ENCODE measurements at regions of chr4 and their contacts with region 1.

Region 1: DNA sequence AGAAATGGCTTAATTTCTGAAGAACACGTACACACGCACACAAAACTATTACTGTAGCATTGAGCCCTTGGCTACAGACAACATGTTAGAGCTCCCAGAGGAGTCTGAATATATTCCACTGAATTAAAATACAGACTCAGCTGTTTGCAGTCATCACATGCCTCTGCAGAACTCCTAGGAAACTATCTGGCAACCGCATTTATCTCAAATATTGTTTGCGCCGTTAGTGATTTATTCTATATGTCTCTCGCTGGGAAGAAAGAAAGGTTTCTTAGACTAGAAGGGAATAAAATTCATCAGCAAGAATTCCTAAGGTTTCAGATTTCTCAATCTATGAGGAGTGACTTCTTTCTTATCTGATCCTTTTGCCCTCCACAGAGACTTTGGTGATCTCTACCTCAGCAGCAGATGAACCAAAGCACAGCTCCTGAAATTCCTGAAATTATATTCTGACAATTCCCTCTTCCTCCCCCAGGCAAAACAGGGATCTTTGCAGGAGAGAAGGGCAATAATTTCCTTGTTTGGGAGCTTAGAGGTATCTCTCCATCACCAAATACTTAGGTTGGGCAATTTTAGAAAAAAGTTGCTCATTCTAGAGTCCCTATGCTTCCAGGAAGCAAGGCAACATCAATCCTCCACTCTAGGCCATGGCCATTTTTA is 199.2 kb downstream of the APBB2 start:
- DNase-seq: no peak
- ATAC-seq: no peak
- H3K4me3 ChIP-seq: no peak overlapping the region
- H3K27ac ChIP-seq: no peak overlapping the region
- H3K4me1 ChIP-seq: peaks cover 2% of the 10 kb centered on the region; the same call in 1 of the 2 replicates
- H3K27me3 ChIP-seq: no peaks in the 10 kb centered on the region
- CTCF ChIP-seq: no peak
- POLR2A ChIP-seq: no peak
- RAD21 ChIP-seq: no peak

Region 2: DNA sequence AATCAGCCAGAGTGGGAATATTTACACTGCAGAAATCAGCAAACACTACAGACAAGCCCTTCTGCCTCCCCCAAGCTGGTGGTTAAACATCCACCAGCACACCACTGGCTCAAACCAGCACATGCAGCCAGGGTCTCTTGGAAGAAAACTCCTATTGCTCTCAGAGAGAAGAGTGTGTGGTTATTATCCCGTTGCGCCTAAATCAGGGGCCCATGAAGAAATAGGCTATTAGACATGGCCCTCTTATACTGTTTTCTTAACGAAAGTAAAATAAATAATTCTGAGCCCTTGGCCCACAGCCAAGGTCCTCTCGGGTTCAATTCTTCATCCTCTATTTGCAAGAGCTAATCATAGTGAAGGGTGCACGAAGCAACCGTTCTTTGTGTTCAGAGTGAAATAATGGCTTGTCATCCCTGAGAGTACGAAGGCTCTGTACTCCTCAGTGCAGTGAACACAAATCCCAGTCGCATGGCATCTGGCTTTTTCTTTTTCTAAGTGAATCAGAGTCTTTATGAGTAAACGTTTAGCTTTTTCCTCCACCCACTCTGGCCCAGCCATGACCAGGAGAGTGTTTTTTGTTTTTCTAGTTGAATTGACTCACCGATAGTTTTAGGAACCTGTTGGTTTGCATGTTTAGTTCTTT is 352.1 kb before region 1 on chr4:
- CTCF ChIA-PET with region 1: no interaction called
- POLR2A ChIA-PET with region 1: no interaction called
- dilution Hi-C with region 1: no loop called
- in situ Hi-C with region 1: no loop called
- intact Hi-C with region 1: no loop called
- DNase-seq: peak; percentile 89
- ATAC-seq: peak; percentile 100
- H3K4me3 ChIP-seq: peak overlapping the region; percentile 4; the same call in 1 of the 2 replicates
- H3K27ac ChIP-seq: no peak overlapping the region; the same call in 1 of the 2 replicates
- H3K4me1 ChIP-seq: peaks cover 6% of the 10 kb centered on the region
- H3K27me3 ChIP-seq: no peaks in the 10 kb centered on the region
- CTCF ChIP-seq: no peak
- POLR2A ChIP-seq: no peak
- RAD21 ChIP-seq: no peak

Region 3: DNA sequence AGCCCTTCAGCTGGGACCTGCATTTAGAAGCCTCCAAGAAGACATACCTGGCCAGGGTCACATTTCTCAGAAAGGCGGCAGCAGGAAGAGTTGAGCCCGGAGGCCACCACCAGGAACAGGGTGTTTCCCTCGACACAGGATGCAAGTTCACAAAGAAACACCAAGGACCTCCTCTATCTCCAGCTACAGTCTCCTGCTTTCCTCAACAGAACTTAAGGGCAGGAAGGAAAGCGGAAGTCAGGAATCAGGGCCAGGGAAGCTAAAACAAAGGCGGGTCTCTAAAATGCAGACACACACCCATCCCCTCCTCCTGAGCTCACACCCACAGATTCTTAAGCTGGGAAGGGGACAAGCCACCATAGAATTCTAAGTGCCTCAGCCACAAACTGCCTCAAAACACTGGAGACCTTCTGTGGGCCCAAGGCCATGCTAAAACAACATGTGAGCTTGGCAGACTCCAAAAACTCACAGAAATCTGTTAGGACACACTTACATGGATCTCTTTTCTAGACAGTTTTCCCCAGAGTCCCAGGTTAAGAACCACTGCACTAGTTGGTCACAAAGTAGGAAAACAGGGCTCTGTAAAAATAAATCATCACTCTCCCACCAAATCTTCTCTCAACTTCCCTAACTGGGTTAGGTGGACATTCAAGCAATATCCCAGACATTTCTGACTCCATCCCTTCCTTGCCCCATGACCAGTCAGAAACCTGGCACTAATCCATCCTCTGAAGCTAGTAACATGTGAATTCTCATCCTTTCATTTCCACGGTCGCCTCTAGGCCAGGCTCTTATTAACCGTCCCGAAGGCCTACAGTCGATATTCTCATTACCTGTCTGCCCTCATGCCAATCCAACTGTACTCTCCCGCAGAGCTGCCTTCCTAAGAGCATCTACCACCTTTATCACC is 36.0 kb after region 1 on chr4:
- CTCF ChIA-PET with region 1: no interaction called
- POLR2A ChIA-PET with region 1: no interaction called
- dilution Hi-C with region 1: no loop called
- in situ Hi-C with region 1: no loop called
- intact Hi-C with region 1: loop called (anchors 5 kb)
- DNase-seq: no peak
- ATAC-seq: no peak
- H3K4me3 ChIP-seq: no peak overlapping the region
- H3K27ac ChIP-seq: no peak overlapping the region
- H3K4me1 ChIP-seq: no peaks in the 10 kb centered on the region
- H3K27me3 ChIP-seq: no peaks in the 10 kb centered on the region
- CTCF ChIP-seq: no peak
- POLR2A ChIP-seq: no peak
- RAD21 ChIP-seq: no peak

Measured in IMR-90 (cell line).